ENCODE measurements at regions of chr7 and their contacts with region 1.

Region 1: GRCh38 chr7:143008007-143008901 is 18.7 kb downstream of the OR9A2 start:
- DNase-seq: peak; percentile 78 to 80 (median 79)
- ATAC-seq: peak; percentile 97 to 98 (median 98)
- H3K4me3 ChIP-seq: no peak overlapping the region
- H3K27ac ChIP-seq: no peak overlapping the region
- H3K4me1 ChIP-seq: peaks cover 0 to 18% (median 0%) of the 10 kb centered on the region in 4 donors
- H3K27me3 ChIP-seq: no peaks in the 10 kb centered on the region
- CTCF ChIP-seq: peak; percentile 90 to 98 (median 96)
- POLR2A ChIP-seq: no peak

Region 2: GRCh38 chr7:142557971-142558582 is 450.2 kb before region 1 on chr7:
- intact Hi-C with region 1: no loop called
- DNase-seq: no peak
- ATAC-seq: peak; percentile 35 to 45 (median 42)
- H3K4me3 ChIP-seq: no peak overlapping the region
- H3K27ac ChIP-seq: no peak overlapping the region
- H3K4me1 ChIP-seq: no peaks in the 10 kb centered on the region
- H3K27me3 ChIP-seq: no peaks in the 10 kb centered on the region
- CTCF ChIP-seq: peak; percentile 38 to 51 (median 44)
- POLR2A ChIP-seq: no peak

Region 3: DNA sequence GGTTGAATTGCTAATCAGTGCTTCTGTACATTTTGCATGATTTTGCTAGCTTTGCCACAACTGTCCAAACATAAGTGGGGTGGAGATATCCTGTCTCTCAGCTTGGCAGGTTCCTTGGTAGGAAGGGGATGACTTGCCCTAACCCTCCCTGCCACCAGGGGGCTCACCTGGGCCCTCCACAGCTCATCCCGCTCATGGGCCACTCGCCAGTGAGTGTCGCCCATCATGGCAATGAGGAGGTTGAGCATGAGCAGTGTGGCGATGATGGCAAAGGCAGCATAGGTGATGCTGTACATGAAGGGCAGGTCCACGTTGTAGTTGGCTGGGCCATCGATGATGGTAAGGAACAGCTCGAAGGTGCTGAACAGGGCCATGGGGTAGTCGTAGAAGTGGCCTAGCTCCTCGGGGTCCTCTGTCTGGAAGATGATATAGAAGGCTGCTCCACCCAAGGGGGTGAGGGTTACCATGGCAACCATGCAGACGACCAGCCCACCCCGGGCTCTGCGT is 134.9 kb before region 1 on chr7:
- intact Hi-C with region 1: loop called (anchors 10 kb)
- DNase-seq: peak in 1 of 3 donors; percentile 47
- ATAC-seq: peak in 3 of 4 donors; percentile 4 to 58 (median 35)
- H3K4me3 ChIP-seq: no peak overlapping the region
- H3K27ac ChIP-seq: no peak overlapping the region
- H3K4me1 ChIP-seq: no peaks in the 10 kb centered on the region
- H3K27me3 ChIP-seq: no peaks in the 10 kb centered on the region
- CTCF ChIP-seq: peak; percentile 20 to 36 (median 33)
- POLR2A ChIP-seq: no peak